ENCODE measurements at regions of chr4 and their contacts with region 1.

Region 1: GRCh38 chr4:60201057-60201673 is 999.0 kb upstream of the ADGRL3 start:
- DNase-seq: peak in 4 of 10 donors; percentile 14 to 44 (median 30)
- H3K4me3 ChIP-seq: no peak overlapping the region
- H3K27ac ChIP-seq: no peak overlapping the region
- H3K27me3 ChIP-seq: no peaks in the 10 kb centered on the region
- CTCF ChIP-seq: peak; percentile 78 to 98 (median 90)

Region 2: DNA sequence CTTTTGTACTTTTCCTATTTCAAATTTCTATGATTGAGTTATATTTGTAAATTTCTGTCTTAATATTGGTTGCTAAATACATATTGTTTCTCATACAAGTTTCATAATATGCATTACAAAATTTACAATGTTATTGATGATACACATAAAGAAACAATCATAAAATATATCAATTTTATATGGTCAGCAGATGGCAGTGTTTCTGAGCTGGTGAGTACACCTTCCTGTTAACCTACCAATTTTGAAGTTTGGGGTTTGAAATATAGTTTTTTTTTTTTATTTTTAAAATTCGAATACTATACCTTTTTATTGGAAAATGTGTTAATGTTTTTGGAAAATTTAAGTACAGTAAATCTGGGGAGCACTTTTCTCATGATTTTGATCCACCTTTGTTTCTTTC is 954.1 kb before region 1 on chr4:
- intact Hi-C with region 1: loop called (anchors 5 to 10 kb)
- DNase-seq: no peak
- H3K4me3 ChIP-seq: no peak overlapping the region
- H3K27ac ChIP-seq: no peak overlapping the region
- H3K27me3 ChIP-seq: no peaks in the 10 kb centered on the region
- CTCF ChIP-seq: peak in 55 of 56 donors; percentile 25 to 80 (median 63)

Region 3: DNA sequence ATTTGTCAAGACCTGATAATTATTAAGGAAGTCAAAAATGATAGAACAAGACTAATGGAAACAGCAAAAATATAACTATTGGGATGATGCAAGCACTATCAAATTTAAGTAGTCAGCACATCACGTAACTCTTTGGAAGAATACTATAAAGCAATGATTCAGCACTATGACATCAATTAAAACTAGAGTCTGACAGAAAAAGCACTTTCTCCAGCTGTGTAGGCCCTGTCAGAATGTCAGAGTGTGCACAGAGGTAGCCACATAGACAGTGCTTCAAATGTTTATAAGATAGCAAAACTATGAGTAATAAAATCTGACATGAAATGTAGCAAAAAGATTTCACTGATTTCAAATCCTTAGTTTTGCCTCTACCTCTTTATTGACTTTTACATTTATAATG is 227.7 kb before region 1 on chr4:
- intact Hi-C with region 1: no loop called
- DNase-seq: no peak
- H3K4me3 ChIP-seq: no peak overlapping the region
- H3K27ac ChIP-seq: no peak overlapping the region
- H3K27me3 ChIP-seq: no peaks in the 10 kb centered on the region
- CTCF ChIP-seq: no peak

Region 4: DNA sequence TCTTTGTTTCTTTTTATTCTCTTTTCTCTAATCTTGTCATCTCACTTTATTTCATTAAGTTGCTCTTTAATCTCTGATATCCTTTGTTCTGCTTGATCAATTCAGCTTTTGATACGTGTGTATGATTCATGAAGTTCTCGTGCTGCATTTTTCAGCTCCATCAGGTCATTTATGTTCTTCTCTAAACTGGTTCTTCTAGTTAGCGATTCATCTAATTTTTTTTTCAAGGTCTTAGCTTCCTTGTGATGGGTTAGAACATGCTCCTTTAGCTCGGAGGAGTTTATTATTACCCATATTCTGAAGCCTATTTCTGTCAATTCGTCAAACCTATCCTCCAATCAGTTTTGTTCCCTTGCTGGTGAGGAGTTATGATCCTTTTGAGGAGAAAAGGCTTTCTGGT is 46.1 kb before region 1 on chr4:
- intact Hi-C with region 1: no loop called
- DNase-seq: no peak
- H3K4me3 ChIP-seq: no peak overlapping the region
- H3K27ac ChIP-seq: no peak overlapping the region
- H3K27me3 ChIP-seq: peaks cover 0 to 3% (median 0%) of the 10 kb centered on the region in 45 donors
- CTCF ChIP-seq: no peak